GM12878 (cell line): ENCODE measurements at regions of chr2 and their contacts with region 1.

Region 1: DNA sequence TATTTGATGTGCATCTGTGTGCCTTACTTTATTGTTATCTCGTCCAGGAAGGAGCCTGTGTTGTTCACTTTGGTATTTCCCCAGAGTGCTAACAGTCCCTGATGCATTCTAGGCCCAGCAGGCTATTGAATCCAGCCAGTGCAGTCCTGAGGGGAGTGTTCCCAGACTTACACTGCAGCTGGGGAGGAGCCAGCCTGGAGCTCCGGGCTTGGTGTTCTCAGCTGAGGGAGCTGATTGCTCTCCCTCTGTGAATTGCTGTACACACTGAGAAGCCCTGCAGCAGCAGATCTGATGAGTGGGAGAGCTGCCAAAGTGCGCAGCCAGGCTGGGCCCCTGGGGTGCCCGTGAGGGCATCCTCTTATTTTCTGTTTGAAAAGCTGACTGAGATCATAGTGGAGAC is 159.2 kb downstream of the GALNT3 start:
- DNase-seq: no peak
- ATAC-seq: peak; percentile 54
- H3K4me3 ChIP-seq: no peak overlapping the region
- H3K27ac ChIP-seq: no peak overlapping the region
- H3K4me1 ChIP-seq: no peaks in the 10 kb centered on the region
- H3K27me3 ChIP-seq: no peaks in the 10 kb centered on the region
- CTCF ChIP-seq: no peak
- EP300 ChIP-seq: no peak
- POLR2A ChIP-seq: no peak
- RAD21 ChIP-seq: no peak

Region 2: DNA sequence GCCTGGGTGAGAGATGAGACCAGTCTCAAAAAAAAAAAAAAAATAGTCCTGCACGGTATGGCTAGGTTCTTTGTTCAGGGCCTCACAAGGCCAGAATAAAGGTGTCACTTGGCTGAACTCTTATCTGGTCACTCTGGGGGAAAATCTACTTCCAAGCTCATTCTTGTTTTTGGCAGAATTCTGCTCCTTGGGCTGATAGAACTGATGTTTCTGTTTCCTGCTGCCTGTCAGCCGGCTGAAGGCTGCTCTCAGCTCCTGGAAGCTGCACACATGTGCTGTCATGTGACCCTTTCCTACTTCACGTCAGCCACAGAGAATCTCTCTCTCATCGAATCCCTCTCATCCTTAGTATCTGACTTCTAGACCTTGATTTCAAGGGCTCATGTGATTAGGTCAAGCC is 155.0 kb before region 1 on chr2:
- CTCF ChIA-PET with region 1: no interaction called
- POLR2A ChIA-PET with region 1: no interaction called
- RAD21 ChIA-PET with region 1: no interaction called
- SMC1A ChIA-PET with region 1: no interaction called
- in situ Hi-C with region 1: no loop called
- intact Hi-C with region 1: no loop called
- DNase-seq: no peak
- ATAC-seq: no peak; the same call in 2 of the 3 replicates
- H3K4me3 ChIP-seq: no peak overlapping the region
- H3K27ac ChIP-seq: no peak overlapping the region
- H3K4me1 ChIP-seq: no peaks in the 10 kb centered on the region
- H3K27me3 ChIP-seq: no peaks in the 10 kb centered on the region
- CTCF ChIP-seq: no peak
- EP300 ChIP-seq: no peak
- POLR2A ChIP-seq: no peak
- RAD21 ChIP-seq: no peak

Region 3: GRCh38 chr2:165539985-165540384 is 94.9 kb before region 1 on chr2:
- CTCF ChIA-PET with region 1: no interaction called
- POLR2A ChIA-PET with region 1: no interaction called
- RAD21 ChIA-PET with region 1: no interaction called
- SMC1A ChIA-PET with region 1: no interaction called
- in situ Hi-C with region 1: no loop called
- intact Hi-C with region 1: no loop called
- DNase-seq: no peak
- ATAC-seq: no peak
- H3K4me3 ChIP-seq: no peak overlapping the region
- H3K27ac ChIP-seq: no peak overlapping the region
- H3K4me1 ChIP-seq: no peaks in the 10 kb centered on the region
- H3K27me3 ChIP-seq: no peaks in the 10 kb centered on the region
- CTCF ChIP-seq: no peak
- EP300 ChIP-seq: no peak
- POLR2A ChIP-seq: no peak
- RAD21 ChIP-seq: no peak

Region 4: GRCh38 chr2:165660361-165660760 is 25.5 kb after region 1 on chr2:
- CTCF ChIA-PET with region 1: interaction called, 7 read pairs
- POLR2A ChIA-PET with region 1: interaction called, 4 read pairs
- RAD21 ChIA-PET with region 1: no interaction called
- SMC1A ChIA-PET with region 1: interaction called, 10 read pairs
- in situ Hi-C with region 1: no loop called
- intact Hi-C with region 1: no loop called
- DNase-seq: no peak
- ATAC-seq: peak; percentile 88
- H3K4me3 ChIP-seq: no peak overlapping the region
- H3K27ac ChIP-seq: no peak overlapping the region
- H3K4me1 ChIP-seq: no peaks in the 10 kb centered on the region
- H3K27me3 ChIP-seq: no peaks in the 10 kb centered on the region
- CTCF ChIP-seq: no peak
- EP300 ChIP-seq: no peak
- POLR2A ChIP-seq: no peak
- RAD21 ChIP-seq: no peak